ENCODE measurements at regions of chr9 and their contacts with region 1.

Region 1: DNA sequence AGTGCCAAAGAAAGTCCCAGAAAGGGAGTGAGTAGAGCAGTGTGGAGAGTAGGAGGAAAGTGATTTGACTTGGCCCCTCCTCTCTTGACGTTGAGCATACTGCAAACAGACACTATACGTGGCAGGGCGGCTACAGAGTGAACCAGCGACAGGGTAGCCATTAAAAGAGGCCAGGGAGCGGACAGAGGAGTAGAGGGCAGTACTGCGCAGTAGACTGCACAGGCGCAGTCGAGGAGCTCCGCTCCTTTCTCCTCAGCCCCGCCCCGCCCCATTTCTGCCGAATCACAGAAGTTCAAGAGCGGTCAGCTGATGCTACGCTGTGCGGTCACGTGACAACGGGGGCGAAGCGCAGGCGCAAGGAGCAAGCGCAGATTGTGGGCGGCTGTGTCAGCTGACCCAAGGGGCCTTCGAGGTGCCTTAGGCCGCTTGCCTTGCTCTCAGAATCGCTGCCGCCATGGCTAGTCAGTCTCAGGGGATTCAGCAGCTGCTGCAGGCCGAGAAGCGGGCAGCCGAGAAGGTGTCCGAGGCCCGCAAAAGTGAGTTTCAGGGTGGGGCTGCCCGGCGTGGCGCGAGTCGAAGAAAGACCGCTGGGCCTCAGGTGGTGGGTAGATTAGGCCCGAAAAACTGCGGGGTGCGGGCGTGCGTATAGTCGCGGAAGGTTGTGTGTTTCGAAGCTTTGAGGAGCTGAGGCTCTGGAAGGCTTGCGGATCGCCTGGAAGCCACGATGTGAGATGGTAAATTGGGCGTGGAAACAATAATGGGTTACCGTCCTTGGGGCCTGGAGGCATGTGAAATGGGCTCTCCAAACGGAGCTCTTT is at the start of gene ATP6V1G1:
- H3K4me3 ChIP-seq: peak within 1 kb of the TSS; percentile 86
- H3K27ac ChIP-seq: peak within 1 kb of the TSS; percentile 54; the same call in 1 of the 2 replicates
- H3K4me1 ChIP-seq: no peaks in the 10 kb centered on the region
- CTCF ChIP-seq: peak; percentile 20; the same call in 1 of the 2 replicates

Region 2: DNA sequence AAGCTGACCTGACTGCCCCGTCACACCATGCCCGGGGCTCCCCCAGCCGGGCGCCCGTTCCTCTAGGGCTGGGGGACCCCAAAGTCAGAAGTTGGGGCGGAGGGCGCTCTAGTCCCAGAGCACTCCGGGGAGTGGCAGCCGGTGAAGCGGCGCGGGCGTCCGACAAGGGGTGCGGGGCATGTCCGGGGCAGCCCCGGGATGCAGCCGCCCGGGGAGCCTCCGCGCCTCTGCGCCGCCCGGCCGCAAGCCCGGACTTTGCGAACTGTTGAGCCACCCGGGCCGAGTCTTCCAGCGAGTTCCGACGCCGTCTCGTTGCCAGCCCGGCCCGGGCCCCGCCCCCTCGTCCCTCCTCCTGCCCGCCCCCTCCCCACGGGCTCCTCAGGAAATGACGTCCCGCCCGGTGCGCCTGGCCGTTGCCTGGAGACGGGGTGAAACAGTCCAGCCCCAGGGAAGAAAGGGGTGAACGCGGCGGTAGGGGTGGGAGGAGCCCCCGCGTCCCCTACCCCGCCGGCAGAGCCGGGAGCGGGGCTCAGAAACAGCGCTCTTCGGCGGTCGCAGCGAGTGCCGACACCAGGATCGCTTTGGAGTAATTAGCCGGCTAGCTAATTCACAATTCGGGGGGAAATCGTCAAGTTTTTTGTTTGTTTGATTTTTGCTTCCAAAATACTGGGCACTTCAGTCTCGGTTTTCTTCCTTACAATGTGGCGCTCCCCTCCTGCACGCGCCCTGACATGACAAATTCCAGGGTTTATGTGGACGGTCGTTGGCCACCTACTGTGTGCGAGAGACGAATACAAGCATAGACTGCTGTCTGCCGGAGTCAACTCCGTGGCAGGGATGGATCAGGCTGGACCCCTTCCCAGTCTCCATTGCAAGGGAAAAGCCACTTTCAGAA is 82.2 kb before region 1 on chr9 and contains the start of gene WHRN:
- CTCF ChIA-PET with region 1: no interaction called
- POLR2A ChIA-PET with region 1: interaction called, 31 read pairs
- H3K4me3 ChIP-seq: peak within 1 kb of the TSS; percentile 66
- H3K27ac ChIP-seq: no peak within 1 kb of the TSS; the same call in 1 of the 2 replicates
- H3K4me1 ChIP-seq: peaks cover 10% of the 10 kb centered on the region
- CTCF ChIP-seq: no peak

Region 3: DNA sequence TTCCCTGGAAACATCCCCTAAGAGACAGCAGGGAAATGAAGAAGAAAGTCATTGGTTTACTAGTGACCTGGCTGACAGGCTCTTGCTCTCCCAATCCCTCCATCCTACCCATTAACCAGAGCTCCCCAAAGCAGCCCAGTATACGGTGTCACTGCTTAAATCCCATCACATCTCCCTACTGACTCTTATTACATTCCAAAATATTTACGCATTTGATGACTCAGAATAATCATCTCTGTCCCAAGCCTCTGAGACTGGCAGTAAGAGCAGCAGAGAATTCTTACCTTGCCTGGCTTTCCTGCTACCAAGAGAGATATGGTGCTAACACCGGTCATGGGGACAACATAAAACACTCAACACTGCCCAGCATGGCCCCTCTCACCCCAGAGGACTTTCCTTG is 62.1 kb before region 1 on chr9:
- CTCF ChIA-PET with region 1: no interaction called
- POLR2A ChIA-PET with region 1: interaction called, 12 read pairs
- H3K4me3 ChIP-seq: no peak overlapping the region
- H3K27ac ChIP-seq: no peak overlapping the region
- H3K4me1 ChIP-seq: no peaks in the 10 kb centered on the region
- CTCF ChIP-seq: no peak

Region 4: DNA sequence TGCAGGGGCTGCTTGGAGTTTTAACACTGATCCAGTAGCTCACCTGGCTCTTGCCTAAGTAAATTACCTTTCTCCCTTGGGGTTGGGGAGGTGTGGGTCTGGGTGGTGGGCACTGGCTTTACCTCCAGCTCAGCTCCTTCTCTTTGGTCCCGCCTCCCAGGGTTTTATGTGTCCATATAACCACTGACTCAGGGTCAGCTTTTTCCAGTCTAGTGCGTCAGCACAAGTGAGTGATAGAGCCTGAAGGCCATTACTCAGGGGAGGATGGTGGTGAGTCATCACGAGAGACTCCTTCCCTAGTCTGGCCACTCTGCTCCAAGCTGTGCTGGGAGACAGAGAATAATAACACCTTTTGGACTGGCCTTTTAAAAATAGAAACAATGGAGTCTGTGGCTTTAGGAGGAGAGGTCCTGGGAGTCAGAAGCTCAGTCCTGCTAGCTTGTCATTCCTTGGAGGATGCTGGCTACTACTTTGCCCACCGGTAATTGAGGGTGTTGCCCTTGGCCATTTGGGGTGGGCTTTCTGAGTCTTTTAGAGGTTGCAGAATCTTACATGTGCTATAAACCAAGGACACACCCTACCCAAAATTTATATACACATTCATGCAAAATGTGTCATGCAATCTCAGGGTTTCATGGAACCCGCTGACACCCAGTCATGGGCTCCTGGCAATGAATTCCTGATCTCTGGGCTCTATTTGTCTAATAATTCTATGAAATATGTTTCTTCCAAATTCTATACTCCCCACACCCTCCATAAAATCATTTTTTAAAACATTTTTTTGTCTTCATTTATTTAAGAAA is 35.5 kb before region 1 on chr9:
- CTCF ChIA-PET with region 1: no interaction called
- POLR2A ChIA-PET with region 1: interaction called, 16 read pairs
- H3K4me3 ChIP-seq: no peak overlapping the region
- H3K27ac ChIP-seq: no peak overlapping the region
- H3K4me1 ChIP-seq: no peaks in the 10 kb centered on the region
- CTCF ChIP-seq: no peak

Region 5: DNA sequence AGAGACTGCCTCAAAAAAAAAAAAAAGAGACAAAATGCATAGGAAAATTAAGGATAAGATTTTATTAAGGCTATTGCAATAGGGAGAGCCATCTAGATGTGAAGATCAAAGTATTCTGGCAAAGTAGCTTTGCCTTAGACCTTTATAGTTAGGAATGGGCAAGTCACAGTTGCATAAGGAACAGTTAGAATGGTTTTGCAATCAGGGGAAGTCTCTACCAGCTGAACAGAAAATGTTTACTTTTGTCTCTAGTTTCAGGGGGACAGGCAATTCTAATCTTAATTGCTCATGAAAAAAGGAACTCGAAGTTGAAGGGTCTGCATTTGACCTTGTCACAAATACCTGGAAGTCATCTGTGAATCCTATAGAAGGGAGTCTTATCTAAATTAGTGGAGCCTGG is 13.2 kb before region 1 on chr9:
- CTCF ChIA-PET with region 1: interaction called, 6 read pairs
- POLR2A ChIA-PET with region 1: interaction called, 20 read pairs
- H3K4me3 ChIP-seq: no peak overlapping the region
- H3K27ac ChIP-seq: no peak overlapping the region
- H3K4me1 ChIP-seq: no peaks in the 10 kb centered on the region
- CTCF ChIP-seq: no peak

Region 6: GRCh38 chr9:114603248-114603647 is 15.7 kb after region 1 on chr9:
- CTCF ChIA-PET with region 1: interaction called, 8 read pairs
- POLR2A ChIA-PET with region 1: interaction called, 21 read pairs
- H3K4me3 ChIP-seq: no peak overlapping the region
- H3K27ac ChIP-seq: no peak overlapping the region
- H3K4me1 ChIP-seq: no peaks in the 10 kb centered on the region
- CTCF ChIP-seq: no peak

Region 7: GRCh38 chr9:114611516-114612271 is 24.1 kb after region 1 on chr9:
- CTCF ChIA-PET with region 1: interaction called, 3 read pairs
- POLR2A ChIA-PET with region 1: interaction called, 21 read pairs
- H3K4me3 ChIP-seq: peak overlapping the region; percentile 52
- H3K27ac ChIP-seq: peak overlapping the region; percentile 91
- H3K4me1 ChIP-seq: no peaks in the 10 kb centered on the region
- CTCF ChIP-seq: no peak

Region 8: GRCh38 chr9:114777821-114778609 is 190.4 kb after region 1 on chr9:
- CTCF ChIA-PET with region 1: no interaction called
- POLR2A ChIA-PET with region 1: no interaction called
- H3K4me3 ChIP-seq: no peak overlapping the region
- H3K27ac ChIP-seq: no peak overlapping the region
- H3K4me1 ChIP-seq: peaks cover 11% of the 10 kb centered on the region
- CTCF ChIP-seq: no peak

Measured in HEK293 (cell line).